ENCODE measurements at regions of chr12 and their contacts with region 1.

Region 1: DNA sequence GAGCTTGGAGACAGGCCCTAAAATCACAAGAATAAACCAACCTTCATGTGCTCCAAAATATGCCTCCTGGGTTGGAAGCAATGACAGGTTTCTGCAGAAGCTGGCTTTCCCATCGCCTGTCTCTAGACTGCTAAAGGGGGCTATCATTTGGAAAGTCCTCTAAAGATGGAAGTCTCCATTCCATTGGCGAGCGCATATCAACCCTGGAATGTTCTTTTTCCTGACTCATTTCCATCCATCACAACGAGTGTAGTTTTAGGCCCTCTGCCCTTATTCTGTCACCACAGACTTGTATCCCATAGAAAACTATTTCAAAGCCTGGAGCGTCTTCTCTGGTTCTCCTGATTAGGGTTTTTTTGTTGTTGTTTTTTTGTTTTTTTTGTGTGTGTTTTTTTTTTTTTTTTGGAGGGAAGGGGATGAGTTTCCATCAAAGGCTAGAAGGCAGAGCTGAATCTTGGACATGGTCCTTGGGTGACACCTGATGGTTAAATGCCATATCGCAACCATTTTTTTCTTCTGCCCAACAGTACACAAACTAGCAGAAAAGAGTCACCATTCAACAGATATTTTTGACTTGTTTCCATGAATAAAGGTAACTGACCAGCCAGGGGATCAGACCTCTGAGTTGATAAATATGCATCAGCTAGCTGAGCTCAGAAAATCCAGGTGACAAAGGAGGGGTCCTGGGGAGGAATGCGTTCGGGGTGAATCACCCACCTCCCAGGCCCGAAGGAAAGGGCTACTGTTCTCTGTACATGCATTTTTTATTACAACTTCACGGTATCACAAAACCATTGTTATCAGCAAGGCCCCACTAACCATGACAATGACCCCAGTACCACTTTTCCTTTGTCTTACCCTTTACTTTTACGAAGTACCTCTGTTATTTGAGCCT is 40.5 kb downstream of the KCNA5 start:
- DNase-seq: peak; percentile 51 to 75 (median 63)
- H3K4me3 ChIP-seq: no peak overlapping the region
- H3K27ac ChIP-seq: no peak overlapping the region
- H3K4me1 ChIP-seq: no peaks in the 10 kb centered on the region
- H3K27me3 ChIP-seq: peaks cover 0 to 11% (median 0%) of the 10 kb centered on the region in 5 experiments

Region 2: GRCh38 chr12:5022465-5023061 is 61.6 kb before region 1 on chr12:
- CTCF ChIA-PET with region 1: interaction called, 172 read pairs
- POLR2A ChIA-PET with region 1: no interaction called
- DNase-seq: peak; percentile 39 to 70 (median 60)
- H3K4me3 ChIP-seq: no peak overlapping the region
- H3K27ac ChIP-seq: no peak overlapping the region
- H3K4me1 ChIP-seq: no peaks in the 10 kb centered on the region
- H3K27me3 ChIP-seq: peaks cover 0 to 17% (median 0%) of the 10 kb centered on the region in 5 experiments

Region 3: DNA sequence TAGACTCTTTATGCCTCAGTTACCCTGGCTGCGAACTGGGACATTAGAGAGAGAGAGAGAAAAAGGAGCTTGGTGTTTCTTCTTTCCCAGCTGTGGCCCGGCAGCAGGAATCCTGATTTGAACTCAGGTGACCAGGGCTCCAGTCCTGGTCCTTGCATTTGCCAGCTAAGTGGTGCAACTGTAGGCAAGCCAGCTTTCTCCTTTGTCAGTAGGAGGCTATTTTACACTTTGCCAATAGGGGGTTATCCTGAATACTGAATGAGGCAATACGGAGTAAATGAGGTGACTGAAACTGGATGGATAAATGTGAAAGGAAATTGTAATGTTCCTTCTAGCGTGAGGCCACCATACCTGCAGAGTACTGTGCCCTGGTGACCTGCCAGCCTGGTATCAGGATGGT is 12.7 kb before region 1 on chr12:
- CTCF ChIA-PET with region 1: interaction called, 23 read pairs
- POLR2A ChIA-PET with region 1: no interaction called
- DNase-seq: no peak
- H3K4me3 ChIP-seq: no peak overlapping the region
- H3K27ac ChIP-seq: no peak overlapping the region
- H3K4me1 ChIP-seq: no peaks in the 10 kb centered on the region
- H3K27me3 ChIP-seq: peaks cover 0 to 7% (median 0%) of the 10 kb centered on the region in 5 experiments